B cell (primary cell): ENCODE measurements at regions of chr5 and their contacts with region 1.

Region 1: GRCh38 chr5:119355685-119356611 is at the start of gene TNFAIP8:
- DNase-seq: peak; percentile 74
- ATAC-seq: peak; percentile 66
- H3K4me3 ChIP-seq: peak within 1 kb of the TSS; percentile 76 to 93 (median 89)
- H3K4me3 Mint-ChIP-seq: peak within 1 kb of the TSS; percentile 92
- H3K27ac ChIP-seq: peak within 1 kb of the TSS; percentile 78 to 91
- H3K27ac Mint-ChIP-seq: peak within 1 kb of the TSS; percentile 93
- H3K4me1 ChIP-seq: peaks cover 73 to 74% of the 10 kb centered on the region in 2 donors
- H3K4me1 Mint-ChIP-seq: peaks cover 87% of the 10 kb centered on the region
- H3K27me3 ChIP-seq: no peaks in the 10 kb centered on the region
- H3K27me3 Mint-ChIP-seq: no peaks in the 10 kb centered on the region
- CTCF ChIP-seq: no peak
- total RNA-seq, gene TNFAIP8: 105 and 109 TPM in 2 replicates

Region 2: DNA sequence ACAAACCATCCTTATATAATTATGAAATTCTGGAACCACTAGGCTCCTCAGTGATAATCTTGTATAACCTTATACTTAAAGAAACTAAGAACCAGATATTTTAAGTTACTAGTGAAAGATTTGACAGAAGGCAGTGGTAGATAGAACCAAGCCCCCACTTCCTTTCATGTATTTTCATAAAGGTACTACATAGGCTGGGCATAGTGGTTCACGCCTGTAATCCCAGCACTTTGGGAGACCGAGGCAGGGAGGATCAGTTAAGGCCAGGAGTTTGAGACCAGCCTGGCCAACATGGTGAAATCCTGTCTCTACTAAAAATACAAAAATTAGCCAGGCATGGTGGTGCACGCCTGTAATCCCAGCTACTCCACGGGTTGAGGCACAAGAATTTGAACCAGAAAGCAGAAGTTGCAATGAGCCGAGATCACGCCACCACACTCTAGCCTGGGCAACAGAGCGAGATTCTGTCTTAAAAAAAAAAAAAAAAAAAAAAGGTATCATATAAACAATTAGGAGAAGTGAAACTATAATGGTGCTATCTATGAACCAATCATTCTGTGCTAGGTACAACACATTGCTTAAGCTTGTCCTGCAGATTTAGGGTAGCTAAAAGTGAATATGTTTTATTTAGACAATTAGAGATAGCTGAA is 339.7 kb before region 1 on chr5:
- CTCF ChIA-PET with region 1: interaction called, 4 read pairs
- POLR2A ChIA-PET with region 1: interaction called, 11 read pairs
- intact Hi-C with region 1: no loop called
- DNase-seq: peak; percentile 80
- ATAC-seq: peak; percentile 81
- H3K4me3 ChIP-seq: peak overlapping the region in 1 of 5 experiments; percentile 4
- H3K4me3 Mint-ChIP-seq: no peak overlapping the region
- H3K27ac ChIP-seq: peak overlapping the region; percentile 79 to 82
- H3K27ac Mint-ChIP-seq: peak overlapping the region; percentile 60
- H3K4me1 ChIP-seq: peaks cover 52 to 55% of the 10 kb centered on the region in 2 donors
- H3K4me1 Mint-ChIP-seq: peaks cover 47% of the 10 kb centered on the region
- H3K27me3 ChIP-seq: no peaks in the 10 kb centered on the region
- H3K27me3 Mint-ChIP-seq: no peaks in the 10 kb centered on the region
- CTCF ChIP-seq: no peak

Region 3: GRCh38 chr5:119079318-119079921 is 276.5 kb before region 1 on chr5:
- CTCF ChIA-PET with region 1: no interaction called
- POLR2A ChIA-PET with region 1: no interaction called
- intact Hi-C with region 1: no loop called
- DNase-seq: no peak
- ATAC-seq: peak; percentile 24
- H3K4me3 ChIP-seq: no peak overlapping the region
- H3K4me3 Mint-ChIP-seq: peak overlapping the region; percentile 50
- H3K27ac ChIP-seq: peak overlapping the region in 1 of 2 donors; percentile 34
- H3K27ac Mint-ChIP-seq: peak overlapping the region; percentile 70
- H3K4me1 ChIP-seq: peaks cover 65 to 67% of the 10 kb centered on the region in 2 donors
- H3K4me1 Mint-ChIP-seq: peaks cover 69% of the 10 kb centered on the region
- H3K27me3 ChIP-seq: no peaks in the 10 kb centered on the region
- H3K27me3 Mint-ChIP-seq: no peaks in the 10 kb centered on the region
- CTCF ChIP-seq: no peak

Region 4: DNA sequence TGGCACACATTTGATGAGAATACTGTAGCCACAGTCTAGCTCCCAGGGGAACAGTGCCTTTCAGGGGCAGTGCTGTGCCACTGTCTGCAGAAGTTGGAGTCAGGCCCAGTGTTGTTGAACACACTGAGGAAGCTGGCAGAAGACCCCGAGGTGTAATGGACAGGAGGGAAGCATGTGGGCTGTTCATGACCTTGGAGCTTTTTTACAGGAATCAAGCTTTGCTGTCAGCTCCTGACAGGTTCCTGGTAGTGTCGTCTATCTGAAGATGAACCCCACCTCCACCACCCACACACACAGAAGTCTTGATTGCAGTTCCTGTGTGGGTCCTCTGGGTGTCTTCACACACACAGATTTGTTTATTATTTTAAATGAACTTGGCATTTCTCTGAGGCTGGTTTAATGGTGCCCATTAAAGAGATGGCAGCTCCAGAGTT is 40.4 kb before region 1 on chr5:
- CTCF ChIA-PET with region 1: interaction called, 28 read pairs
- POLR2A ChIA-PET with region 1: interaction called, 7 read pairs
- intact Hi-C with region 1: no loop called
- DNase-seq: peak; percentile 82
- ATAC-seq: peak; percentile 81
- H3K4me3 ChIP-seq: peak overlapping the region in 1 of 5 experiments; percentile 39
- H3K4me3 Mint-ChIP-seq: peak overlapping the region; percentile 66
- H3K27ac ChIP-seq: peak overlapping the region; percentile 57 to 65
- H3K27ac Mint-ChIP-seq: peak overlapping the region; percentile 90
- H3K4me1 ChIP-seq: peaks cover 95% of the 10 kb centered on the region in 2 donors
- H3K4me1 Mint-ChIP-seq: peaks cover 89% of the 10 kb centered on the region
- H3K27me3 ChIP-seq: no peaks in the 10 kb centered on the region
- H3K27me3 Mint-ChIP-seq: no peaks in the 10 kb centered on the region
- CTCF ChIP-seq: peak; percentile 68

Region 5: GRCh38 chr5:119367502-119368237 is 11.7 kb after region 1 on chr5:
- CTCF ChIA-PET with region 1: interaction called, 13 read pairs
- POLR2A ChIA-PET with region 1: interaction called, 13 read pairs
- intact Hi-C with region 1: loop called (anchors 1 kb)
- DNase-seq: peak; percentile 49
- ATAC-seq: peak; percentile 55
- H3K4me3 ChIP-seq: peak overlapping the region in 3 of 5 experiments; percentile 9 to 40 (median 13)
- H3K4me3 Mint-ChIP-seq: peak overlapping the region; percentile 68
- H3K27ac ChIP-seq: peak overlapping the region; percentile 67 to 79
- H3K27ac Mint-ChIP-seq: peak overlapping the region; percentile 92
- H3K4me1 ChIP-seq: peaks cover 82 to 88% of the 10 kb centered on the region in 2 donors
- H3K4me1 Mint-ChIP-seq: peaks cover 83% of the 10 kb centered on the region
- H3K27me3 ChIP-seq: no peaks in the 10 kb centered on the region
- H3K27me3 Mint-ChIP-seq: no peaks in the 10 kb centered on the region
- CTCF ChIP-seq: no peak

Region 6: GRCh38 chr5:119389288-119390030 is 33.5 kb after region 1 on chr5:
- CTCF ChIA-PET with region 1: interaction called, 4 read pairs
- POLR2A ChIA-PET with region 1: interaction called, 10 read pairs
- intact Hi-C with region 1: no loop called
- DNase-seq: no peak
- ATAC-seq: peak; percentile 17
- H3K4me3 ChIP-seq: peak overlapping the region in 1 of 5 experiments; percentile 16
- H3K4me3 Mint-ChIP-seq: peak overlapping the region; percentile 48
- H3K27ac ChIP-seq: peak overlapping the region; percentile 45 to 71
- H3K27ac Mint-ChIP-seq: peak overlapping the region; percentile 78
- H3K4me1 ChIP-seq: peaks cover 83 to 91% of the 10 kb centered on the region in 2 donors
- H3K4me1 Mint-ChIP-seq: peaks cover 90% of the 10 kb centered on the region
- H3K27me3 ChIP-seq: no peaks in the 10 kb centered on the region
- H3K27me3 Mint-ChIP-seq: no peaks in the 10 kb centered on the region
- CTCF ChIP-seq: no peak